ENCODE measurements at regions of chr17 and their contacts with region 1.

Region 1: DNA sequence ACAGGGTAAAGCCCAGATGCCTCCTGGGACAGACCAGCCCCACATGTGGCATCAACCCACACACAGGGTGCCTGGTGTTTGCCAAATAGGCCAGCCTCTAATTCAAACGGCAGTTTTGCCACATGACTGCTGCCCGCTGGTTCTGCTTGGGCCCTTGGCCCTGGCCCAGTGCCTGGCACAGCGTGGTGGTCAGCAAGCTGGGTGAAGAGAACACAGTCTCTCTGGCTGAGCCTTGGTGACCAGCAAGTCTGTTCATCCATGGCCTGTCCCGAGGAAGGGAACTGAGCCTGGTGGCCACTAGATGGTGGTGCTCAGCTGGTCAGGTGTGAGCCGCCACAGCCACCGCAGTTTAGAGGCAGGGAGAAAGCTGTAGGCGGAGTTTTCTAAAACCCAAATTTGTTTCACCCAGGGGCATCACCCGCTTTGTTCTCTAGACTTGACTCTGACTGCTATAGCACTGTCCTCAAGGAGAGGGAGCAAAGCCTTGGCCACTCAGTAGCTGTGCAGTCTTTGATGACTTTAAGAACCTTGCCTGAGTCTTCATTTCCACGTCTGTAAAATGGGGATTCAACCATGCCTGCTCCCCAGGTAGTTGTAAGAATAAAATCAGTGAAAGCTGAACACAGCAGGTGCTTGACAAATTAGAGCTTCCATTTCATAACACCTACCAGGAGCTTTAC is 4.7 kb upstream of the GFAP start:
- DNase-seq: peak; percentile 81
- ATAC-seq: peak; percentile 84
- H3K4me3 Mint-ChIP-seq: no peak overlapping the region
- H3K27ac Mint-ChIP-seq: peak overlapping the region; percentile 32; the same call in 1 of the 2 replicates
- H3K4me1 Mint-ChIP-seq: peaks cover 20% of the 10 kb centered on the region
- H3K27me3 Mint-ChIP-seq: peaks cover under 1% of the 10 kb centered on the region; the same call in 1 of the 2 replicates
- CTCF ChIP-seq: no peak; the same call in 1 of the 2 replicates

Region 2: DNA sequence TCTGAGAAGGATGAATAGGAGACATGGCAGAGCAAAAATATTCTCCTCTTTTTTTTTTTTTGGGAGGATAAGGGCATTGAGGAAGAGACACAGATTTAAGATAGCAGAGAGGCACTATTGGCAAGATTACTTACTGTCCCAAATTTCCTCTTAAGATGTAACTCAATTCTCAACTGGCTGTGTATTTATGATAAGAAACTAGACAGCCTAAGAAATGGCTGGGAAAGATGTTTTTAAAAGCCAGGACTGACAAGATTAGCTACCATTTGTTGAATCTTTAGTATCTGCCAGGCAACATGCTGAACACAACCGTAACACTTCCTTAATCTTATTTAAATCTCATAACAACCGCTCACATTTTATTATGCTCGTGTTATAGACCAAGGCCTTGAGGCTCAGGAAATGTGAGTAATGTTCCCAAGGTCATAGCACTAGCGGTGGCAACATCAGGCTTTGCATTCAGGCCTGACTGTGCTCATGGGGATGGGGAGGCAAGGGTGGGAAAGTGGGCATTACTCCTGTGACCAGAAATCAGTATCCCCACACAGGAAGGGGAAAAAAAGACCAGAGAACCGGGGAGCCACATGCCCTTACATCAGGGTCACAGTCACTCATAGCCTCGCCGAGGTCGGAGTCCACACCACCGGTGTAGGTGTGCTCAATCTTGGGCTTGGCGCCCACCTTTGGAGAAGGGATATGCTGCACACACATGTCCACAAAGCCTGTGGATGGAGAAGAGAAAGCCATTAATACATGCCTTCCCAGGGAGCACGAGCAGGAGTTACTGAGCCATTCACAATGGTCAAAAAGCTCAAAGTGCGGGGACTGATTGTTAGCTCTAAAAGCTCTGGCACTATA is 56.7 kb before region 1 on chr17:
- CTCF ChIA-PET with region 1: no interaction called
- POLR2A ChIA-PET with region 1: no interaction called
- DNase-seq: no peak
- ATAC-seq: no peak
- H3K4me3 Mint-ChIP-seq: no peak overlapping the region
- H3K27ac Mint-ChIP-seq: no peak overlapping the region
- H3K4me1 Mint-ChIP-seq: no peaks in the 10 kb centered on the region
- H3K27me3 Mint-ChIP-seq: no peaks in the 10 kb centered on the region
- CTCF ChIP-seq: no peak

Region 3: GRCh38 chr17:44887971-44888954 is 31.8 kb before region 1 on chr17:
- CTCF ChIA-PET with region 1: no interaction called
- POLR2A ChIA-PET with region 1: no interaction called
- DNase-seq: no peak
- ATAC-seq: no peak
- H3K4me3 Mint-ChIP-seq: no peak overlapping the region
- H3K27ac Mint-ChIP-seq: no peak overlapping the region
- H3K4me1 Mint-ChIP-seq: no peaks in the 10 kb centered on the region
- H3K27me3 Mint-ChIP-seq: no peaks in the 10 kb centered on the region
- CTCF ChIP-seq: no peak

Region 4: GRCh38 chr17:44899069-44899782 is 20.8 kb before region 1 on chr17 and contains the start of gene EFTUD2:
- CTCF ChIA-PET with region 1: interaction called, 12 read pairs
- POLR2A ChIA-PET with region 1: interaction called, 4 read pairs
- DNase-seq: peak; percentile 89
- ATAC-seq: peak; percentile 85
- H3K4me3 Mint-ChIP-seq: peak within 1 kb of the TSS; percentile 88
- H3K27ac Mint-ChIP-seq: peak within 1 kb of the TSS; percentile 100
- H3K4me1 Mint-ChIP-seq: peaks cover 12% of the 10 kb centered on the region
- H3K27me3 Mint-ChIP-seq: no peaks in the 10 kb centered on the region; the same call in 1 of the 2 replicates
- CTCF ChIP-seq: no peak
- total RNA-seq, gene EFTUD2: 128 to 162 TPM (median 148 TPM) in 3 replicates

Region 5: GRCh38 chr17:44952946-44953475 is 33.0 kb after region 1 on chr17:
- CTCF ChIA-PET with region 1: interaction called, 76 read pairs
- POLR2A ChIA-PET with region 1: no interaction called
- DNase-seq: no peak
- ATAC-seq: peak; percentile 81
- H3K4me3 Mint-ChIP-seq: no peak overlapping the region
- H3K27ac Mint-ChIP-seq: peak overlapping the region; percentile 29
- H3K4me1 Mint-ChIP-seq: peaks cover 7% of the 10 kb centered on the region
- H3K27me3 Mint-ChIP-seq: peaks cover 6% of the 10 kb centered on the region
- CTCF ChIP-seq: no peak

Region 6: GRCh38 chr17:44979426-44979995 is 59.5 kb after region 1 on chr17:
- CTCF ChIA-PET with region 1: interaction called, 14 read pairs
- POLR2A ChIA-PET with region 1: no interaction called
- DNase-seq: no peak
- ATAC-seq: no peak
- H3K4me3 Mint-ChIP-seq: no peak overlapping the region
- H3K27ac Mint-ChIP-seq: no peak overlapping the region
- H3K4me1 Mint-ChIP-seq: peaks cover 17% of the 10 kb centered on the region
- H3K27me3 Mint-ChIP-seq: peaks cover 3% of the 10 kb centered on the region; the same call in 1 of the 2 replicates
- CTCF ChIP-seq: no peak

Region 7: DNA sequence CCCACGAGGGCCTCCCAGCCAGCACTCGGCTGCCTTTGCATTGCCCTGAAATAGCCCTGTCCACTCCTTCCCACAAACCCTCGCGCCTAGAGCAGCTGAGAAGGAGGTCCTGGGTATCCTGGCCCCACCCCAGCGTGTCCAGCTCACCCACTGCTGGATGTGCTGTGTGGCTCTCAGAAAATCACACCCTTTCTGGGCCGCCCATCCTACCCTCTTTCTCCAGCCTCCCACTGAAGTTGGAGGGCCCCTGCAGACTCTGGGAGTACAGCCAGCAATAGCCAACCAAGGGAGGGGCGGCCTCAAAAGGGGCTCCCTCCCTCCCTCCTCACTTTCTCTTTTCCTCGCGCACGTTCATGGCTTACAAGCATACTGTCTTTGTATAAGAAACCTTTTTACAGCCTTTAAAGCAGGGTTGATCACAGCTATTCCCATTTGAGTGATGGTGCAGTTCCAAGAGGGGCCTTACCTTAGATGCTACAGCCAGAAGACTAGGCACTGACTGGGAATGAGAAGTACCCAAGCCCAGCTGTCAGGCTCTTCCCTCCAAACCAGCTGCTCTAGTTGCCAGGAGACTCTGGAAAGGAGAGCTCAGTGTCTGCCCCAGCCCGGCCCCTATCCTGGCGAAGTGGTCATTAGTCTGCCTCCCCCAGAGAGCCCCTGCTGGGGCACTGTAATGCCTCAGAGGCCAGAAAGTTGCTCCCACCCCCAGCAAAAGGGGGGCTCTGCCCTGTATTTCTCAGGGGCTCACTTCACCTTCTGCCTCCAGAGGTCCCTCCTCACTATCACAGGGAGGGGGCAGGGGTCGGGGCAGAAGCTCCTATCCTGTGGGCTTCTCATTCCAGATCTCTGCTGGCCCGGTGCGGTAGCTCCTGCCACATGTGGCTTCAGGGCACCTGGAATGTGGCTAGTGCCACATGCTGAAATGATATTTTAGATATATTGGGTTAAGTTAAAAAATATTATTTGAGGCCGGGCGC is 93.3 kb after region 1 on chr17:
- CTCF ChIA-PET with region 1: interaction called, 177 read pairs
- POLR2A ChIA-PET with region 1: interaction called, 4 read pairs
- DNase-seq: peak; percentile 27
- ATAC-seq: peak; percentile 57
- H3K4me3 Mint-ChIP-seq: no peak overlapping the region
- H3K27ac Mint-ChIP-seq: peak overlapping the region; percentile 21; the same call in 1 of the 2 replicates
- H3K4me1 Mint-ChIP-seq: peaks cover 22% of the 10 kb centered on the region
- H3K27me3 Mint-ChIP-seq: peaks cover 12% of the 10 kb centered on the region
- CTCF ChIP-seq: no peak

Region 8: GRCh38 chr17:45098869-45099616 is 179.0 kb after region 1 on chr17:
- CTCF ChIA-PET with region 1: interaction called, 15 read pairs
- POLR2A ChIA-PET with region 1: no interaction called
- DNase-seq: peak; percentile 94
- ATAC-seq: peak; percentile 96
- H3K4me3 Mint-ChIP-seq: no peak overlapping the region
- H3K27ac Mint-ChIP-seq: peak overlapping the region; percentile 87
- H3K4me1 Mint-ChIP-seq: no peaks in the 10 kb centered on the region
- H3K27me3 Mint-ChIP-seq: no peaks in the 10 kb centered on the region
- CTCF ChIP-seq: peak; percentile 82

Measured in WTC11 (cell line).